Dorsolateral prefrontal cortex (tissue), 120 donors: ENCODE measurements at regions of chr5 and their contacts with region 1.

Region 1: DNA sequence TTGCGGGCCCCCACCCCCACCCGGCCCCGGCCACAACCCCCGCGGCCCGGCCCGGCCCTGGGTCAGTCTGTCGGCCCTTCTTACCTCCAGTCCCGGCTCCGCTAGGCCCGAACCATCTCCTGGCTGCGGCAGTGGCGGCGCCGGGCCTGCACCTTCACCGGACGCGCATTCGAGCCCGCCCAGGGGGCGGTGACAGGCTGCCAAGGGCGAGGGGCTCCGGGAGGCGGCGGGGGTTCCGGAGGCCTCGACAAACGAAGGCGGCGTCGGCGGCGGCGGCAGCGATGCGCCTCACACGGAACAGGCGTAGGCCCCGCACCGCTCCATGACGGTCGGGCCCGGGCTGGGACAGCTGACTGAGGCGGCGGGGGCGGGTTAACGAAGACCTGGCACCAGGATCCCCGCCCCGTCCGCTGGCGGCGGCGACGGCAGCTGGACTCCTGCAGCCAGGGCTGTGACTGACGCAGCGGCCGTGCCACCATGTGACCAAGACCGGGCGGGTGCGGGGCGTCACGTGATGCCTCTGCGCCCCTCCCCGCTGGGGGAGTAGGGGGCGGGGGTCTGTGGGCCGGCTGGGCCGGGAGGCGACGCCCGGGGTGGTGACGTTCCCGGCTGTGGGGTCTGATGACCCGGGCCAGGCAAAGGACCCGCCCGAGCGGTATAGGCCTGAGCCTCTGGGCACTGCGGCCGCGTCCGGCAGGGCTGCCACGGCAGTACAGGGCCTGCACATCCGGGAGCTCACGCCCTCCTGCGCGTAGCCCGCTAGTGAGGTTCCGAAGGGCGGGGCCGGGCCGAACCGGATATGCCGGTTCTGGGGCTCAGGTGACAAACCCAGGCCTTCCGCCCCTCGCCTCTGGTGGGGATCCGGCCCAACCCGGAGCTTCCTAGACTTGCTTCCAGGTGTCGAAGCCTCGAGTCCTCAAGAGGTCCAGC is at the start of gene AFF4:
- DNase-seq: peak; percentile 94 to 98 (median 96)
- H3K4me3 ChIP-seq: peak within 1 kb of the TSS; percentile 50 to 100 (median 96)
- H3K27ac ChIP-seq: peak within 1 kb of the TSS; percentile 89 to 100 (median 99)
- H3K27me3 ChIP-seq: no peaks in the 10 kb centered on the region
- CTCF ChIP-seq: peak in 28 of 56 donors; percentile 2 to 52 (median 21)
- total RNA-seq, gene AFF4: 68.0 to 123 (median 95.9) TPM

Region 2: DNA sequence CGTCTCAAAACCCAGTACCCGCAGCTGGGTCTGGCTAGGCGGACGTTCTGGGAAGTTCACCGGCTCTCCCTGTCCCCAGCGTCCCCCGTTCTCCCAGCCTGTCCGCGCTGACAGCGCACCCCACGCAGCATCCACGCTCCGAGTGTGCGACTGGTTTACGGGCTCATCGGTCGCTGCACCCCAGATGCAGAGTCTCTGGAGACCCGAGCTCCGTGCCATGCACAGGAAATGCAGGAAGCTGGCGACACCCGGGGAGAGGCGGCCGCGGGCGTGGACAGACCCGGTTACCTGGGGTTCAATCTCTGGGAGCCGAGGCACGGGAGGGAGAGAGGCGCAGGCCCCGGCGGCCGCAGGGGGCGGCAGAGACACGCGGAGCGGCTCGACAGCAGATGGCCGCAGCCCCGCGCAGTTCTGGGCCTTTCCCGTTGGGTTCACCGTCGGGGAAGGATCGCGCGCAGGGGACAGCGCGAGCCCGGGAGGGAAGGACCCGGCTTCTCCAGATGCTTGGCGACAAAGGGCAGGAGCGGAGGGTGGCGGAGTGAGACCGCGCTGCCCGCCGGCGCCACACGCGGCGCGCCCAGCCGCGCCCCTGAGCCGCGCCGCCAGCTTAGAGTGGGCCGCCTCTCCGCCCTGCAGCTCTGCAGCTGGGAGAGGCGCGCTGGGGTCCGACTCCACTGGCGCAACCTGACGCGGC is 133.6 kb before region 1 on chr5:
- intact Hi-C with region 1: loop called (anchors 1 to 5 kb)
- DNase-seq: peak; percentile 68 to 86 (median 76)
- H3K4me3 ChIP-seq: peak overlapping the region; percentile 38 to 93 (median 81)
- H3K27ac ChIP-seq: peak overlapping the region; percentile 46 to 100 (median 95)
- H3K27me3 ChIP-seq: no peaks in the 10 kb centered on the region
- CTCF ChIP-seq: peak; percentile 50 to 95 (median 81)

Region 3: DNA sequence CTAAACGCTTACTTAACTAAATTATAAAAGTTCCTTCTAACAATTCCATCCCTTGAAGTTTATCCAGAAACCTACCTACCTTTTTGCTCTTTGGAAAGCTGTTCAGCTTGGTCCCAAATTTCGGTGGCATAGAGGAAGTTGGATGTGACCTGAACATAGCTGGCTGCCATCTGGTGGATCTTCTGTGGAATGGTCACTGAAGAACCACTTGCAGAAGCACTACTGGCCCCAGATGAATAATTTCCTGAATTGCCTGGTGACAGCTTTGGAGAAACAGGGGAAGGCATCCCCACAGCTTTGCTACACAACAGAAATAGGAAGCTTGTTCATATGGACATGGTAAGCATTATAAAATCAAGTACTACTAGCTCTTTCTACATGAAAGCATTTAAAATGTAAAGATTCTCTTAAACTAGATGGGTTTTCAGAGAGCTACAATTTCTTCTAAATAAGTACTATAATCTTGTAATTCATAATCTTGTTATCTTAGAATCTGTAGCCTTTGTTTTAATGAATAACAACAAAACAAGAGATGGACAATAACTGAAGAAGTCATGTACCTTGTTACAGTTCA is 80.1 kb before region 1 on chr5:
- intact Hi-C with region 1: loop called in 1 of 2 experiments (anchors 5 kb)
- DNase-seq: peak in 7 of 10 donors; percentile 48 to 72 (median 58)
- H3K4me3 ChIP-seq: no peak overlapping the region
- H3K27ac ChIP-seq: peak overlapping the region in 43 of 59 donors; percentile 2 to 84 (median 46)
- H3K27me3 ChIP-seq: no peaks in the 10 kb centered on the region
- CTCF ChIP-seq: peak; percentile 42 to 89 (median 76)

Region 4: GRCh38 chr5:133025804-133026663 is 62.6 kb after region 1 on chr5 and contains the start of gene ZCCHC10:
- intact Hi-C with region 1: loop called (anchors 1 to 5 kb)
- DNase-seq: peak; percentile 79 to 96 (median 92)
- H3K4me3 ChIP-seq: peak within 1 kb of the TSS; percentile 61 to 99 (median 91)
- H3K27ac ChIP-seq: peak within 1 kb of the TSS; percentile 39 to 98 (median 94)
- H3K27me3 ChIP-seq: no peaks in the 10 kb centered on the region
- CTCF ChIP-seq: peak in 2 of 56 donors; percentile 16 to 18
- total RNA-seq, gene ZCCHC10: 7.5 to 24.1 (median 14.4) TPM

Region 5: GRCh38 chr5:133051580-133052332 is 88.3 kb after region 1 on chr5 and contains the start of gene HSPA4:
- intact Hi-C with region 1: loop called (anchors 2 to 5 kb)
- DNase-seq: peak; percentile 96 to 99 (median 98)
- H3K4me3 ChIP-seq: peak within 1 kb of the TSS; percentile 72 to 100 (median 98)
- H3K27ac ChIP-seq: peak within 1 kb of the TSS; percentile 96 to 100 (median 100)
- H3K27me3 ChIP-seq: no peaks in the 10 kb centered on the region
- CTCF ChIP-seq: peak in 15 of 56 donors; percentile 3 to 38 (median 13)
- total RNA-seq, gene HSPA4: 61.6 to 183 (median 97.3) TPM